Cardiac septum (tissue), 1 donor: ENCODE measurements at regions of chr13 and their contacts with region 1.

Region 1: DNA sequence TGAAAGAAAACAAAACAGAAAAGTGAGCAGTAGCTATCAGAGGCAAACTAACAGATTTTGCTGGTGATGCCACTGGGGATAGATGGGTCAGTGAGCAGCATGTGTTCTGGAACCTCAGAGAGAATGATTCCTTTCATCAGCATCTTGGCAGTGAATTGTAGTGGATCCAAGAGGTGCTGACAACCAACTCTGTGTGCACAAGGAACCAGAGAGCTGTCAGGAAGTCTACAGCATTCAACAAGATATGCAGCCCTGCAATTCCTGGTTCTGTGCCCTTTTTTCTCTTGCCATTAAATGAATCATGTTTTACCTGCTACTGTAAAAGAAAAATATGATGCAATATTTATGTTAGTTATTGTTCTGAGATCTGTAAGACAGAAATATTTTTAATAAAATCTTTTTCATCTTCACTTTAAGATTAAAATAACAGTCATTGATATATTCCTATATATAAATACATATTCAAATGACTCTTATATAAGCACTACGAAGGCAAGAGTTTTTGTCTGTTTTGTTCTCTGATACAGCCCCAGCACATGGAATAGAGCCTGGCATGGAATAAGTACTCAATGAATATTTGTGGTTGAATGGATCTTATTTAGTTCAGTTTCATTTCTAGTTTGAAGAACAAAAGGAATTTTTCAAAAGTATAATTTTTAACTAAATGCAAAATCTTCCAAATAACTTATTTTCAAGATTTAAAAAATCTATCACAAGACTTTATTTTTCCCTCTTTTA is 80.8 kb downstream of the FREM2 start:
- DNase-seq: no peak

Region 2: DNA sequence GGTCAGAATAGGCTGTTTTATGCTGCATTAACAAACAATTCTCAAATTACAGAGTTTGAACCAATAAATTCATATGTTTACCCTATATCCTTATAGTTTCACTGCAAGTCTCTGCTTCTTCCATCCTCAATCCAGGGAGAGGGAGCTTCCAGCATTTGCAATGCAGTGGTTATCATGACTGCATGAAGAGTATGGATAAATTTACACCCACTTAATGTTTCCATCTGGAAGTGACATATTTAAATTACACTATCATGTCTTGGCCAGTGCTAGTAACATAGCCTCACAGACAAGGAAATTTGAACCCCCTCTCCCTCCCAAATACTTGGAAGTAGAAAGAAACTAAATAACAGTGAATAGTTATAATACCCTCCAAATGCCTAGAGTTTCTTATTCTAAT is 451.6 kb before region 1 on chr13:
- intact Hi-C with region 1: no loop called
- DNase-seq: no peak

Region 3: GRCh38 chr13:38686577-38687245 is 81.0 kb before region 1 on chr13 and contains the start of gene FREM2:
- intact Hi-C with region 1: loop called (anchors 5 kb)
- DNase-seq: no peak
- total RNA-seq, gene FREM2: 0.22 TPM

Region 4: DNA sequence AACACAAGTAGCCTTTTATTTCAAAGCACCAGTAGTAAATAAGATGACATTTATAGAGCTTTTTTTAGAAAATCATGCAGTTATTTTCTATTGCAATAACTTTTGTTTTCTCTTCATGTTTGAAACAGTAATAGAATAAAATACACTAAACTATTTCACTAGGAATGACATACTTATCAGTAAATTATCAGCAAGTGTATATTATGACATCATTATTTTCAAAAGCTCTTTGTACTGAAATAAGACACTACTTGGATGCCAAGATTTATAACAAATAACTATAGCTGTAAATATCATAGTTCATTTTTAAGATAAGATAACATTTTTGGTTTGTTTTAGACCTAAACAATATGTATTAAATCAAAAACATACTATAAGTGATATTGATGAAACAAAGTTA is 166.1 kb after region 1 on chr13:
- intact Hi-C with region 1: no loop called
- DNase-seq: no peak